ENCODE measurements at regions of chr21 and their contacts with region 1.

Region 1: DNA sequence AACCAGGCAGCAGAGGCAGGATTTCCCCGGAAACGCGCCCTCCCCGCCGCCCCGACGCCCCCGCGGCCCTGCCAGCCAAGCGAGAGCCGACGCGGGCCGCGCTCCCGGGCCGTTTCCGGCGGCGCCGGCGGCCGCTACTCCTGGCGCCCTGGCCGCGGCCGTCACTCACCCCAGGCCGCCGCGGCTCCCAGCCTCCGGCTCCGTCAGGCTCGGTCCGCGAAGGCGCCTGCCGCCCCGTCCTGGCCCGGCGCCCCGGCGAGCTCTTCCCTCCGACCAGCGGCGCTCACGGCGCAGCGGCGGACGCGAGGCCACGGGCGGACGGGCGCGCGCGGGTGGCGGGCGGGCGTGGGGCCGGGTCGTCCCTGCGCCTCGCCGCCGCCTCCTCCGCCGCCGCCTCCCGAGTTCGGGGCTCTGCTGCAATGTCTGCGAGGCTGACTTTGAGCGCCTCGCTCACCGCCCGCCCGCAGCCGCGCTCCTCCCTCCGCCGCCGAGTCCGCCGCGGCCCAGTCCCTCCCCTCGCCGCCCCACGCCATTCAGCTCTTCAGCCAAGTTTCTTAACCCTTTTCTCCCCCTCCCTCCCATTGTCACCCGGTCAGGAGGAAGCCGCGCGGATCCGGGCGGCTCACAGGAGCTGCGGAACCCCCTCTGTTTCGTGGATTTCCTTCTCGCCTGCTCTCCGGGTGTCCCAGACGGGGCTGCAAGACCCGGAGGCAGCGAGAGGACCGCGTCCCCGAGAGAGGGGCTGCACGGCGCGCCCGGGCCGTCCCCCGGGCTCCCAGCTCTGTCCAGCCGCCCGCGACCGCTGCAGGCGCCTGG is at the start of gene NRIP1:
- DNase-seq: peak; percentile 92 to 96
- ATAC-seq: peak; percentile 90 to 94 (median 92)
- H3K4me3 ChIP-seq: peak within 1 kb of the TSS; percentile 83
- H3K27ac ChIP-seq: peak within 1 kb of the TSS; percentile 98
- H3K4me1 ChIP-seq: peaks cover 37% of the 10 kb centered on the region
- H3K27me3 ChIP-seq: no peaks in the 10 kb centered on the region
- CTCF ChIP-seq: no peak
- total RNA-seq, gene NRIP1: 42.8 to 137 (median 58.9) TPM

Region 2: GRCh38 chr21:14864211-14865021 is 200.4 kb before region 1 on chr21:
- intact Hi-C with region 1: loop called (anchors 2 to 10 kb)
- DNase-seq: peak; percentile 70 to 77
- ATAC-seq: peak; percentile 93 to 96 (median 94)
- H3K4me3 ChIP-seq: no peak overlapping the region
- H3K27ac ChIP-seq: peak overlapping the region; percentile 44
- H3K4me1 ChIP-seq: peaks cover 9% of the 10 kb centered on the region
- H3K27me3 ChIP-seq: no peaks in the 10 kb centered on the region
- CTCF ChIP-seq: peak; percentile 66

Region 3: GRCh38 chr21:15006594-15007230 is 58.1 kb before region 1 on chr21:
- intact Hi-C with region 1: loop called in 1 of 2 experiments (anchors 2 kb)
- DNase-seq: no peak
- ATAC-seq: peak; percentile 40 to 60 (median 53)
- H3K4me3 ChIP-seq: peak overlapping the region; percentile 33
- H3K27ac ChIP-seq: peak overlapping the region; percentile 77
- H3K4me1 ChIP-seq: peaks cover 68% of the 10 kb centered on the region
- H3K27me3 ChIP-seq: no peaks in the 10 kb centered on the region
- CTCF ChIP-seq: no peak

Region 4: DNA sequence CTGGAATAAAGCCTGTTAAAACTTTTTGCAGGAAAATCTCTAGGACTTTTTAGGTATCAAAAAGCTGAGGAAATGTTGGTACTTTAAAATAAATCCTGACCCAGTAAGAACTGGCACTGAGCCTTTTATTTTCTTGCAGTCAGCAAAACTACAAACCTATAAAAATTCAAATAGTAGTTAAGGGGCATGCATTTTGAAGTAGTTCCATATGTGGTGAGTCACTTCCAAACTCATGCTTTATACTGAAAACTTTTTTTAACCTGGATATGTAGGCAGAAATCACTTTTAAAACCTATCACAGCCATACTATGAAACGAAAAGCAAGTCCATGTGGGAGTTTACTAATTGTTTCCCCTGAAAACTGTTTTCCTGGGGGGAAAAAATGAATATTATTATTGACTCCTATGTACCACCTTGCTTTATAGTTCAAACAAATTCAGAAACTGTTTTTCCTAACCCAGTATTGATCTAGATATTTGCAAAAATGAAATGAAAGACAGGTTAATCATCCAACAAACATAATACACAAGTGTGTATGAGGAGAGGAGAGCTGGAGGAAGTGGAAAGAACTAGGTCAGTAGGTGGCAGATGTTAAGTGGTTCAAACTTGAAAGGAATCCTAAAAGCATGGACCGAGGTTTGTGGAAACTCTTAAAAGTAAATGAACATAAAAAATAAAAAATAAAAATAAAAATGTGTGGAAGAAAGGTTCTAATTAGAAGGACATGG is 30.5 kb before region 1 on chr21:
- intact Hi-C with region 1: loop called in 1 of 2 experiments (anchors 1 kb)
- DNase-seq: no peak
- ATAC-seq: no peak
- H3K4me3 ChIP-seq: no peak overlapping the region
- H3K27ac ChIP-seq: no peak overlapping the region
- H3K4me1 ChIP-seq: peaks cover 30% of the 10 kb centered on the region
- H3K27me3 ChIP-seq: no peaks in the 10 kb centered on the region
- CTCF ChIP-seq: no peak

Region 5: DNA sequence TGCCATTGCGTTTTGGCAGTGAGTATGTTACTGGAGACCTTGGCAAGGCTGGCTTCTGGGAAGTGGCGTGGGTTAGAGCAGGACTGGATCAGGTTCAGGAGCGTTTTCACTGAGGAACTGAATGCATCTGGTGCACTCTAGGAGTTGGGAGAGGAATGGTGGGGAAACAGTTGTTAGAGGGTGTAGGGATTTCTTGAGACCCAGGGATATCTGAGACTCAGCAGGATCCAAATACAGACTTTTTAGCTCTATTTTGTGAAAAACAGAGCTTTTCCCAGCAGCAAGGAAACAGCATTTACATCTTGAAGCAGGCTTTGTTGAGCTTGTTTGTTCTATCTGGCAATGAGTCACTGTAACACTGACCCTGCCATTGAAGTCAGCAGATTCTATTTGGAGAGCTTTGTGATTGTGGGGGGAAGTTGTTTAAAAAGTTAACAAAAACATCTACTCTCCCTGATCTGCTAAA is 56.9 kb after region 1 on chr21:
- intact Hi-C with region 1: loop called in 1 of 2 experiments (anchors 2 kb)
- DNase-seq: peak; percentile 59 to 80
- ATAC-seq: peak; percentile 88 to 92 (median 90)
- H3K4me3 ChIP-seq: peak overlapping the region; percentile 43
- H3K27ac ChIP-seq: peak overlapping the region; percentile 90
- H3K4me1 ChIP-seq: peaks cover 28% of the 10 kb centered on the region
- H3K27me3 ChIP-seq: no peaks in the 10 kb centered on the region
- CTCF ChIP-seq: no peak

Region 6: GRCh38 chr21:15164678-15165303 is 100.0 kb after region 1 on chr21:
- intact Hi-C with region 1: loop called in 1 of 2 experiments (anchors 2 kb)
- DNase-seq: no peak
- ATAC-seq: peak; percentile 94 to 95 (median 94)
- H3K4me3 ChIP-seq: no peak overlapping the region
- H3K27ac ChIP-seq: peak overlapping the region; percentile 79
- H3K4me1 ChIP-seq: peaks cover 12% of the 10 kb centered on the region
- H3K27me3 ChIP-seq: no peaks in the 10 kb centered on the region
- CTCF ChIP-seq: no peak

Region 7: DNA sequence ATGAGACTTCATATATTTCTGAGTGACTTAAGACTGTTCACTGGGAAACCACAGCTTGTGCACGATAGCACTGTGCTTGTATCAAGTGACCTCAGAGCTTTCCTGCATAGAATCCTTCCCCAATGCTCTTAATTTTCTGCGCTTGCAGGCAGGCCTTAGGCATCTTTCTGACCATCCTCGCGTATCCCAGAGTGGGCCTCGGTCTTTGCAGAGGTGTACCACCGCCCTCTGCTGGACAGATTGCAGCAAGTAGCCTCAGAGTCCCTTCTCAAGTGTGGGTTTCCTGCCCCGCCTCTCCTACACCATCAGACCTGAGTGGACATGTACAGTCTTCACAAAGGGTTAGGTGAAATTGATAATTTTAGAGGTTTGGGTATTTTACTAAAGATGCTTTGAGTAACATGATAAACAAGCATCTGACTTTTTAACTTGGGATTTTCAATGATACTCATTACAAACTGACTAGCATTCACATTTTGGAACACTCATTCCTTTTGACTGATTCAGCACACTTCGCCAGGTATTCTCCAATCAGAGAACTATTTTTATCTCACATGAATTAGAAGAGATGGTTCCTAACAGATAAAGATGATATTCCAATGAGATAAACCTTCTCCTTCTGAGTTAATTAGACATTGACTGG is 418.5 kb after region 1 on chr21:
- intact Hi-C with region 1: loop called (anchors 2 to 5 kb)
- DNase-seq: peak; percentile 82 to 91
- ATAC-seq: peak; percentile 98 to 100 (median 100)
- H3K4me3 ChIP-seq: no peak overlapping the region
- H3K27ac ChIP-seq: no peak overlapping the region
- H3K4me1 ChIP-seq: peaks cover 4% of the 10 kb centered on the region
- H3K27me3 ChIP-seq: no peaks in the 10 kb centered on the region
- CTCF ChIP-seq: peak; percentile 96

Measured in psoas muscle (tissue), 8 donors.